H1 (cell line): ENCODE measurements at regions of chr17 and their contacts with region 1.

Region 1: DNA sequence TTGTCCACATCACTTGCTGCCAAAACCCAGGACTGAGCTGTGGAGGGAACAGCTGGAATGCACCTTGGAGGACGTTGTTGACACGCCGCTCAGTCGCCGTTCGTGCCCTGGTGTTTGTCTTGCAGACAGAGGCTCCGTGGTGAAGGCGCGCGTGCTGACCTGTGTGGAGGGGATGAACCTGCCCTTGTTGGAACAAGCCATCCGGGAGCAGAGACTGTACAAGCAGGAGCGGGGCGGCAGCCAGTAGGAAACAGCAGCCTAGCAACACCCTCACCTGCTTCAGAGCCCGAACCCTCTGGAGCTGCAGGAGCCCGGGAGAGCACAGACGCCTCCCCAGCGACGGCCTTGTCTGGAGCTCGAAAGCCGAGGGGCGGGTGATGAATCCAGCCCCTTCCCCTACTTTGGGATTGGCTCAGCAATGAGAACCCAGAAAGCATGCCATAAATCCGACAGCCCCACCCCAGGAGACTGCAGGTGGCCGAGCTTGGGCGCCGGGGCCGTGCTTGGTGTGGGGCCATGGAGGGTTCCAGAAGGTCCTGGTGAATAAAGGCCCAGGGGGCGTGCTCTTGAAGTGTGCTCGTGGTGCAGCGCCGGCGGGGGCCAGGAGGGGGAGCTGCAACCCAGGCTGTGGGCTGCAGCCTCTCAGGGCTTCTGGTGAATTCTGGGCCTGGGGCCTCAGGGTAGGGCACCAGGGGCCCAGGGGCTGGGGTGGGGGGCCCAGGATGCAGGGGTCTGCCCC is 470 bp upstream of the CDK3 start:
- DNase-seq: peak; percentile 62 to 97
- H3K4me3 ChIP-seq: no peak overlapping the region
- H3K27ac ChIP-seq: no peak overlapping the region
- H3K4me1 ChIP-seq: no peaks in the 10 kb centered on the region; a peak in 3 of 7 replicates
- H3K27me3 ChIP-seq: no peaks in the 10 kb centered on the region
- CTCF ChIP-seq: peak; percentile 84 to 97 (median 95)
- EP300 ChIP-seq: no peak
- POLR2A ChIP-seq: no peak
- RAD21 ChIP-seq: peak; percentile 75 to 87

Region 2: GRCh38 chr17:75854101-75854748 is 146.0 kb before region 1 on chr17:
- CTCF ChIA-PET with region 1: no interaction called
- POLR2A ChIA-PET with region 1: no interaction called
- DNase-seq: no peak
- H3K4me3 ChIP-seq: peak overlapping the region; percentile 55 to 91 (median 67)
- H3K27ac ChIP-seq: 0 out of 2 replicates have a peak overlapping the region, but pooled peaks have one; percentile 27
- H3K4me1 ChIP-seq: peaks cover 0 to 7% (median 2%) of the 10 kb centered on the region in 4 experiments; a peak in 4 of 7 replicates
- H3K27me3 ChIP-seq: no peaks in the 10 kb centered on the region
- CTCF ChIP-seq: no peak
- EP300 ChIP-seq: no peak
- POLR2A ChIP-seq: no peak
- RAD21 ChIP-seq: no peak

Region 3: DNA sequence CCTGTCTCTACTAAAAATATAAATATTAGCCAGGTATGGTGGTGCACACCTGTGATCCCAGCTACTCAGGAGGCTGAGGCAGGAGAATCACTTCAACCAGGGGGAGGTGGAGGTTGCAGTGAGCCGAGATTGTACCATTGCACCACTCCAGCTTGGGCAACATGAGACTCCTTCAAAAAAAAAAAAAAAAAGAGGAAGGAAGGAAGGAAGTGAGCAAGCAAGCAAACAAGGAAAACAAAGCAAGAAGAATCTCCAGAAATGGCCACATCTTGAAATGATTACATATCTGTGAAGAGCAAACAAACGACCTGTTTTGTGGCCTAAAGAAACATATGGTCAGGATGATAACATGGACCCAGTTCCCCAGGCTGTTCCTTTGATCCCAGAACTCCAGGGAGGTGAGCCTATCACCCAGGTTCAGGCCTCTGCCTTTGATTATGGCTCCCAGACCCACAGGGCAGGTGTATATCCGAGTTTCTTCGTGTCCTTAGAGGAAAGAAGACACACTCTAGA is 30.1 kb before region 1 on chr17:
- CTCF ChIA-PET with region 1: interaction called, 11 read pairs
- POLR2A ChIA-PET with region 1: interaction called, 3 read pairs
- DNase-seq: no peak
- H3K4me3 ChIP-seq: no peak overlapping the region
- H3K27ac ChIP-seq: no peak overlapping the region
- H3K4me1 ChIP-seq: no peaks in the 10 kb centered on the region
- H3K27me3 ChIP-seq: no peaks in the 10 kb centered on the region
- CTCF ChIP-seq: no peak
- EP300 ChIP-seq: no peak
- POLR2A ChIP-seq: no peak
- RAD21 ChIP-seq: no peak

Region 4: DNA sequence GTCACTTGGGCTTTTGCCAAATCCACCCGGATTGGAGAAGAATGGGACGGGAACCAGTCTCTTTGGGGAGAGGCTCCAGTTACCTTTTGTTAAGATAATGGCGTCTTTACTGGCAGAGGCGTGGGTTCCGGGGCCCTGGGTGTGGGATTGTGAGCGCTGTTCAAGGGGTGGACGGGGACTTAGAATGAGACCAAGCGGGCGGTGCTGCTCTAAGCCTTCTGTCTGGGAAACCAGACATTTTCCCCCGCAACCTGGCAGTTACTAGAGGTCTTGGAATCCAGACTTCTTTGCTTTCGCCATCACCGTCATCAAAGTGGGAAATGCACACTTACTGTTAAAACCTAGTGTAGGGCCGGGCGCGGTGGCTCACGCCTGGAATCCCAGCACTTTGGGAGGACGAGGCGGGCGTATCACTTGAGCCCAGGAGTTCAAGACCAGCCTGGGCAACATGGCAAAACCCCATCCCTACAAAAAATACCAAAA is 20.4 kb before region 1 on chr17:
- CTCF ChIA-PET with region 1: interaction called, 19 read pairs
- POLR2A ChIA-PET with region 1: interaction called, 6 read pairs
- DNase-seq: no peak
- H3K4me3 ChIP-seq: peak overlapping the region; percentile 72 to 88 (median 86)
- H3K27ac ChIP-seq: peak overlapping the region; percentile 93
- H3K4me1 ChIP-seq: peaks cover 6 to 15% (median 13%) of the 10 kb centered on the region in 4 experiments
- H3K27me3 ChIP-seq: no peaks in the 10 kb centered on the region
- CTCF ChIP-seq: no peak
- EP300 ChIP-seq: no peak
- POLR2A ChIP-seq: no peak; a peak in 1 of 3 replicates
- RAD21 ChIP-seq: no peak

Region 5: GRCh38 chr17:76139801-76140660 is 139.8 kb after region 1 on chr17:
- CTCF ChIA-PET with region 1: no interaction called
- POLR2A ChIA-PET with region 1: no interaction called
- DNase-seq: peak in 1 of 2 experiments; percentile 73
- H3K4me3 ChIP-seq: peak overlapping the region; percentile 40 to 71 (median 45)
- H3K27ac ChIP-seq: no peak overlapping the region
- H3K4me1 ChIP-seq: peaks cover 17 to 71% (median 60%) of the 10 kb centered on the region in 4 experiments
- H3K27me3 ChIP-seq: peaks cover 31 to 75% (median 67%) of the 10 kb centered on the region in 4 experiments
- CTCF ChIP-seq: peak in 1 of 3 experiments; percentile 22; a peak in 1 of 4 replicates
- EP300 ChIP-seq: no peak
- POLR2A ChIP-seq: no peak
- RAD21 ChIP-seq: no peak